ENCODE measurements at regions of chr2 and their contacts with region 1.

Region 1: GRCh38 chr2:112726497-112727190 is 5.8 kb downstream of the NT5DC4 start:
- DNase-seq: peak; percentile 93
- ATAC-seq: peak; percentile 99
- H3K4me3 Mint-ChIP-seq: no peak overlapping the region
- H3K27ac Mint-ChIP-seq: peak overlapping the region; percentile 75
- H3K4me1 Mint-ChIP-seq: peaks cover 19% of the 10 kb centered on the region
- H3K27me3 Mint-ChIP-seq: peaks cover 10% of the 10 kb centered on the region

Region 2: DNA sequence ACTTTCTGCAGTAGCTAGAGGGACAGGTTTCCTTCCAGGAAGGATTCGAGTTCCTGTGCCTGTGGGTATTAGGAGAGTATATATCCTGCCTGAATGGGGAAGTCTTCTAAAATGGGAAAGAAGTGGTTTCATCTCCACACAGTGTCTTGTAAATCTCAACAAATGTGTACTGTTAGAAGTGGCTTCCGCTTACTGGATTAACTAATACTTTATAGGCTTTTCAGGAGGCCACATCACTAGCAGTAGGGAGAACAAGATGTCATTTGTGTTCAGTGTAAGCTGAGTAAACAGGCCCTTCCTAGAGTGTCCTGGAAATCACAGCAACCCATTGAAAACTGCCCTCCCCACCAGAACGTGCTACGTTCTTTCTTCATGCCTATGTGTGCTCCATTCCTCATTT is 196.9 kb before region 1 on chr2:
- CTCF ChIA-PET with region 1: no interaction called
- DNase-seq: no peak
- ATAC-seq: no peak
- H3K4me3 Mint-ChIP-seq: no peak overlapping the region
- H3K27ac Mint-ChIP-seq: no peak overlapping the region
- H3K4me1 Mint-ChIP-seq: no peaks in the 10 kb centered on the region
- H3K27me3 Mint-ChIP-seq: no peaks in the 10 kb centered on the region

Region 3: GRCh38 chr2:112584134-112584890 is 142.3 kb before region 1 on chr2 and contains the start of gene CHCHD5:
- CTCF ChIA-PET with region 1: interaction called, 29 read pairs
- DNase-seq: peak; percentile 98
- ATAC-seq: peak; percentile 90
- H3K4me3 Mint-ChIP-seq: peak within 1 kb of the TSS; percentile 83
- H3K27ac Mint-ChIP-seq: peak within 1 kb of the TSS; percentile 96
- H3K4me1 Mint-ChIP-seq: peaks cover 39% of the 10 kb centered on the region
- H3K27me3 Mint-ChIP-seq: no peaks in the 10 kb centered on the region
- total RNA-seq, gene CHCHD5: 25.4 to 27.8 TPM

Region 4: DNA sequence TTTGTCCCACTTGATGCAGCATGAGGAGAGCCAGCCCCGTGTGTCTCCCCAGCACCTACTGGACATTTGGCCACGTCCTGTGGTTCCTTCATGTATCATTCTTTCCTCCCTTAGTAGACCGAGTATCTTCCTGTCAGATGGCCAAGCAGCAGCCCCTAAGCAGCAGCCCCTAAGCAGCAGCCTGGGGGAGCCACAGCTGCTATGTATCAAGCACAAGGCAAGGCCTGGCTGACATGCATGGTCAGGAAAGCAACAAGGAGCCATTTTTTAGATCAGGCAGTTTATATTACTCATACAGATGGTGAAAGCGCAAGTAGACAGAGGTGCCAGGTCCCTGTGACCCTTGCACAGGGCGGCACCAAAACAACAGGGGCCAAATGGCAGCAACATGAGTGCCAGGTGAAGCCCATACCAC is 120.1 kb before region 1 on chr2:
- CTCF ChIA-PET with region 1: interaction called, 155 read pairs
- DNase-seq: no peak
- ATAC-seq: no peak
- H3K4me3 Mint-ChIP-seq: no peak overlapping the region
- H3K27ac Mint-ChIP-seq: no peak overlapping the region
- H3K4me1 Mint-ChIP-seq: peaks cover 2% of the 10 kb centered on the region
- H3K27me3 Mint-ChIP-seq: peaks cover 19% of the 10 kb centered on the region

Region 5: DNA sequence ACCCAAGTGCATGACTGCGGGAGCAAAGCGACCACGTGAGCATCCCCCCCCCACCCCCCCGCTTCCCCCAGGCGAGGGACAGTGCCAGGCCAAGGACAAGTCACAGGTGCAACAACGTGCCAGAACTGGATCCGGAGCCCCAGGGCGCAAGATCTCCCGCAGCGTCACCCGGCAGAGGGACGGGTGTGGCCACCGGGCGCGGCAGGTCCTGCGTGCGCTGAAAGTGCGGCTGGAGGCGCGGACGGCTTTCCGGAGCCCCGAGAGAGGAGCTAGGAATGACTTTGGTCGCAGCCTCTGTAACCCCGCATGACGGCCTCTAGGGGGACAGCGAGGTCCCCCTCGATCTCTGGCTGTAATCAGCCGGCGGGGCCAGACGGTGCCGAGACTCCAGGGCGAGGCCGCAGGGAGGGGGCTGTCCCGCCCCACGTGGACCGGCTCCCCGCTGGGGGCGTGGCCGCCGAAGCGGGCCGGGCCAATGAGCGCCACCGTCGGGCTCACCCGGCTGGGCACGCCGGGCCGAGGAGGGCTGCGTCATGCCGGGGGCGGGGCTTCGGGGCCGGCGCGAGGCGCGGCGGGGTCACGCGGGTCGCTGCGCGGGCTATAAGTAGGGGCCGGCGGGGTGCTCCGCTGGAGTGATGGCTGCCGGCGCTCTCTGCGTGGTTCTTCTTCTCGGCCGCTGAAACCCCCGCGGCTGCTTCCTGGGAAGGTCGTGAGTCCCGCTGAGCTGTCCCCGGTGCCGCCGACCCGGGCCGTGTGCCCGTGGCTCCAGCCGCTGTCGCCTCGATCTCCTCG is 81.1 kb before region 1 on chr2 and contains the start of gene SLC20A1:
- CTCF ChIA-PET with region 1: interaction called, 12 read pairs
- DNase-seq: peak; percentile 98
- ATAC-seq: peak; percentile 92
- H3K4me3 Mint-ChIP-seq: peak within 1 kb of the TSS; percentile 96
- H3K27ac Mint-ChIP-seq: peak within 1 kb of the TSS; percentile 84
- H3K4me1 Mint-ChIP-seq: peaks cover 62% of the 10 kb centered on the region
- H3K27me3 Mint-ChIP-seq: no peaks in the 10 kb centered on the region
- total RNA-seq, gene SLC20A1: 134 to 146 TPM

Region 6: GRCh38 chr2:112692496-112692911 is 34.1 kb before region 1 on chr2:
- CTCF ChIA-PET with region 1: interaction called, 53 read pairs
- DNase-seq: peak; percentile 92
- ATAC-seq: peak; percentile 92
- H3K4me3 Mint-ChIP-seq: peak overlapping the region; percentile 33
- H3K27ac Mint-ChIP-seq: peak overlapping the region; percentile 95
- H3K4me1 Mint-ChIP-seq: peaks cover 45% of the 10 kb centered on the region
- H3K27me3 Mint-ChIP-seq: no peaks in the 10 kb centered on the region

Region 7: DNA sequence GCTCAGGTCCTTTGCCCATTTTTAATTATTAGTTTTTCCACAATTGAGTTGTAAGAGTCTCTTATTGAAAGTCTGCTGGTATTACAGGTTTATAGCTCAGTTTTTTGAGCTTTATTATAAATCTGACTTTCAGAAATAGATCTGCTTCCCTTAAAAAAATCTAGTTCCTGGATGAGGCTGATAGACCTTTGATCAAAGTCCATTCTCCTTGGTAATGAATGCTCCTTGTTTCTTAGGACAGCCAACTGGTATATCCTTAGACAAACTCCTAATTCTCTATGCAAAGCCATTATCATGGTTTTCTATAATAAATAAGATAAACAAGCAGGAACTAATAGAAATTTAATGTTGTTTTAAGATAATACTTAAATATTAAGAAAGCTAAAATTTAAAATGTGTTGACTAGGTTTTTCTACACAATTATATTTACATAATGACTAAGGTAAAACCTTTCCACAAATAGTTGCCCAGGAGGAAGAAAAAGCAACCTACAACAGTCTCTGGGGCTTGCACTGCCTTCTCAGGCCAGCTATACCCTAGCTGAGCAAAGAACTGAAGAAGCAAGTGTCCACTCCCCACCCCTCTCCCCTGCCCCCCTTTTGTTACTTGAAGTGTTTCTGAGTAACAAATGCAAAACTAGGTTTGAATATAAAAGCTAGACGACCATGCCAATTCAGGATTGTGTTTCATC is 11.0 kb after region 1 on chr2:
- CTCF ChIA-PET with region 1: interaction called, 29 read pairs
- DNase-seq: no peak
- ATAC-seq: no peak
- H3K4me3 Mint-ChIP-seq: no peak overlapping the region
- H3K27ac Mint-ChIP-seq: no peak overlapping the region
- H3K4me1 Mint-ChIP-seq: no peaks in the 10 kb centered on the region
- H3K27me3 Mint-ChIP-seq: no peaks in the 10 kb centered on the region

Measured in activated CD8-positive, alpha-beta memory T cell treated with anti-CD3 and anti-CD28 coated beads, Interleukin-2, amount 10 ng/mL, durations not matched to agents 7 days and 5 days (primary cell).